ENCODE measurements at regions of chr20 and their contacts with region 1.

Region 1: GRCh38 chr20:63664861-63665716 is 7.0 kb downstream of the RTEL1 start:
- DNase-seq: no peak
- H3K4me3 ChIP-seq: no peak overlapping the region
- H3K27ac ChIP-seq: no peak overlapping the region
- H3K4me1 ChIP-seq: no peaks in the 10 kb centered on the region
- H3K27me3 ChIP-seq: no peaks in the 10 kb centered on the region
- CTCF ChIP-seq: no peak

Region 2: GRCh38 chr20:63698739-63699465 is 33.8 kb after region 1 on chr20:
- intact Hi-C with region 1: loop called (anchors 5 kb)
- DNase-seq: peak in 1 of 2 donors; percentile 82
- H3K4me3 ChIP-seq: no peak overlapping the region
- H3K27ac ChIP-seq: peak overlapping the region; percentile 64 to 78
- H3K4me1 ChIP-seq: peaks cover 16 to 18% of the 10 kb centered on the region in 2 donors
- H3K27me3 ChIP-seq: no peaks in the 10 kb centered on the region
- CTCF ChIP-seq: no peak

Measured in ascending aorta (tissue), 2 donors.